Ascending aorta (tissue), 2 donors: ENCODE measurements at regions of chrX and their contacts with region 1.

Region 1: DNA sequence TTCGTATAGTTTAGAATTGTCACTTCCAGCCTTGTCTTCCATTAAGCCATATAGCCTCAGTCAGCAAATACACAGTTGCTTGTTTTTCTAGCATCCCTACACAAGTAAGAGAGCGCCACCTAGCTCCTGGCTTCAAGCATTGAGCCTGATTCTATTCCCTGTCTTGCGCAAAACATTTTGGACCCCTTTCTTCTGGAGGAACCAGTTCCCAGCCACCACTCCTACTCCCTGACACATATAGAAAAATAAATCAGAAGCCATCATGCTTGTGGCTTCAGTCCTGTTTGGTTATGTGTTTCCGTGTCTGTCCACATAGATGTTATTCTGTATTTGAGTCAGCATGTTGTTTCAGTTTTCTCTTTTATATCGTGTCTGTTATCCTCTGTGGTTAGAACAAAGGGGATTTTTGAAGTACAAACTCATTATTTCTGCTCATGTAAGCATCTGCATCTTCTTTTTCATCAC is 59.9 kb downstream of the GK start:
- DNase-seq: peak in 1 of 2 donors; percentile 67
- H3K4me3 ChIP-seq: no peak overlapping the region
- H3K27ac ChIP-seq: no peak overlapping the region
- H3K4me1 ChIP-seq: no peaks in the 10 kb centered on the region
- H3K27me3 ChIP-seq: no peaks in the 10 kb centered on the region
- CTCF ChIP-seq: peak in 2 of 3 experiments; percentile 9 to 48

Region 2: DNA sequence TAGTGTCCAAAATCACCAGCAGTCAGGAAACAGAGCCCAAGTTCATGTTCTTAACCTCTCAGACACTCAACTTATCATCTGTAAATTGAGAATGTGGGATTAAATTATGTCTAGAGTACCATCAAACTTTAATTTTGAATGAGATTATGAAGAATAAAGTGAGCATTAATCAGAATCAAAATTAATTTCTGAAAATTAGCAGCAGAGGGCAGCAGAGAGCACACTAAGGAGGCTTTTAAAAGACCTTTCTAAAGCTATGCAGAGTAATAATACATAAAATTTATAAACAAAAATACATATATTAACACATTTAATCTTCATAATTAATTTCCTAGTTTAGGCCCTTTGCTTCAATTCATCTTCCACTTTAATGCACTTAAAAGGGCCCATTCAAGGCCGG is 142.6 kb before region 1 on chrX:
- intact Hi-C with region 1: loop called (anchors 2 kb)
- DNase-seq: no peak
- H3K4me3 ChIP-seq: no peak overlapping the region
- H3K27ac ChIP-seq: no peak overlapping the region
- H3K4me1 ChIP-seq: no peaks in the 10 kb centered on the region
- H3K27me3 ChIP-seq: no peaks in the 10 kb centered on the region
- CTCF ChIP-seq: peak; percentile 22 to 49 (median 33)